HCT116 (cell line): ENCODE measurements at regions of chr17 and their contacts with region 1.

Region 1: DNA sequence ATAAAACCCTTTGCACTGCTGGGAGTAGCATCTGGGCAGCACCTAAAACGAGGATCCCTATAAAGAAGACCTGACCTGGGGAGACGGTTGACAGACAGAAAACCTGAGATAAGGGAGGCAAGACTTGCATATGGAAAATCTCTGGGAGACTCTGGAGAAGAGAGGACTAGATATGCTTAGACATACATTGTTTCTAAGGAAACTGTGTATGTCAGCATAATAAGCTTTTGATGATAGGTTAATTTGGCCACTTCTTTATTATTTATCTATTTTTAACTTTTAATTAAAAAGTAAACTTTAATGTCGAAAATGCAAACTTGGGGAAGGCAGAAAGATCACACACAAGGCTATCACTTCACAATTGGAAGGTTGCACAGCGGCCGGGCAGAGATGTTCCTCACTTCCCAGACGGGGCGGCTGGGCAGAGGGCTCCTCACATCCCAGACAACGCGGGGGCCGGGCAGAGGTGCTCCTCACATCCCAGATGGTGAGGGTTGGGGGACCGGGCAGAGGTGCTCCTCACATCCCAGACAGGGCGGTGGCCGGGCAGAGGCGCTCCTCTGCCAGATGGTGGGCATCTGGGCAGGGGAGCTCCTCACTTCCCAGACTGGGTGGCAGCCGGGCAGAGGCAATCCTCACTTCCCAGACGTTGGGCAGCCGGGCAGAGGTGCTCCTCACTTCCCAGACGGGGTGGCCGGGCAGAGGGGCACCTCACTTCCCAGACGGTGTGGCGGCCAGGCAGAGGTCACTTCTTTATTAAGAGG is 64.3 kb upstream of the HS3ST3A1 start:
- DNase-seq: no peak
- ATAC-seq: no peak
- H3K4me3 ChIP-seq: no peak overlapping the region
- H3K27ac ChIP-seq: no peak overlapping the region
- H3K4me1 ChIP-seq: no peaks in the 10 kb centered on the region
- H3K27me3 ChIP-seq: no peaks in the 10 kb centered on the region
- CTCF ChIP-seq: no peak
- POLR2A ChIP-seq: no peak
- RAD21 ChIP-seq: no peak

Region 2: DNA sequence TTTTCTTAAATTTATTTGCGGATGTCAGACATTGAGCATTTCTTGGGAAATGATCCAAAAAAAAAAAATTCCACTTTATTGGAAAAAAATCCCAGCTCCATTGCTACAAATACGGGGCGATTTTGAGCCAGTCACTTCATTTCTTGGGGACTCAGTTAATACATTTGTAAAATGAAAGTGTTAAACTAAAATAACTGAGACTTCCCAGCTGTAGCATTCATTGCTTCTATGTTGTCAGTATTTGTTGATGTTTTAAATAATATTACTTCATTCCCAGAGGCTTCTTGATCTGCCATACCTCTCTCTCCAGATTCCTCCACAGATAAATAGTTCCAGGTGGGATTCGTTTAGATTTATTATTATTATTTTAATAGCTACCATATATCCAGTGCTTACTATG is 12.8 kb after region 1 on chr17:
- CTCF ChIA-PET with region 1: no interaction called
- POLR2A ChIA-PET with region 1: no interaction called
- RAD21 ChIA-PET with region 1: no interaction called
- intact Hi-C with region 1: loop called (anchors 2 kb)
- DNase-seq: no peak
- ATAC-seq: no peak
- H3K4me3 ChIP-seq: no peak overlapping the region
- H3K27ac ChIP-seq: no peak overlapping the region
- H3K4me1 ChIP-seq: no peaks in the 10 kb centered on the region
- H3K27me3 ChIP-seq: no peaks in the 10 kb centered on the region
- CTCF ChIP-seq: no peak
- POLR2A ChIP-seq: no peak
- RAD21 ChIP-seq: no peak

Region 3: GRCh38 chr17:14300575-14301278 is 634.7 kb after region 1 on chr17 and contains the start of gene HS3ST3B1:
- CTCF ChIA-PET with region 1: no interaction called
- POLR2A ChIA-PET with region 1: no interaction called
- RAD21 ChIA-PET with region 1: no interaction called
- intact Hi-C with region 1: no loop called
- DNase-seq: peak; percentile 96
- ATAC-seq: peak; percentile 96
- H3K4me3 ChIP-seq: peak within 1 kb of the TSS; percentile 45 to 59
- H3K27ac ChIP-seq: peak within 1 kb of the TSS; percentile 55; the same call in 1 of the 2 replicates
- H3K4me1 ChIP-seq: peaks cover 11 to 28% of the 10 kb centered on the region in 2 experiments; a peak in 3 of 4 replicates
- H3K27me3 ChIP-seq: peaks cover 7% of the 10 kb centered on the region; the same call in 1 of the 2 replicates
- CTCF ChIP-seq: no peak
- POLR2A ChIP-seq: peak; percentile 39
- RAD21 ChIP-seq: no peak
- total RNA-seq, gene HS3ST3B1: 2.4 TPM